B cell (primary cell): ENCODE measurements at regions of chr11 and their contacts with region 1.

Region 1: GRCh38 chr11:120335908-120336640 is at the start of gene ARHGEF12:
- DNase-seq: peak; percentile 91
- ATAC-seq: peak; percentile 70
- H3K4me3 ChIP-seq: peak within 1 kb of the TSS; percentile 42 to 77 (median 75)
- H3K4me3 Mint-ChIP-seq: peak within 1 kb of the TSS; percentile 93
- H3K27ac ChIP-seq: peak within 1 kb of the TSS; percentile 44 to 56
- H3K27ac Mint-ChIP-seq: peak within 1 kb of the TSS; percentile 91
- H3K4me1 ChIP-seq: peaks cover 22 to 35% of the 10 kb centered on the region in 2 donors
- H3K4me1 Mint-ChIP-seq: peaks cover 35% of the 10 kb centered on the region
- H3K27me3 ChIP-seq: peaks cover 0 to 46% (median 35%) of the 10 kb centered on the region in 4 experiments
- H3K27me3 Mint-ChIP-seq: peaks cover 46% of the 10 kb centered on the region
- CTCF ChIP-seq: no peak
- total RNA-seq, gene ARHGEF12: 21.6 and 23.8 TPM in 2 replicates

Region 2: DNA sequence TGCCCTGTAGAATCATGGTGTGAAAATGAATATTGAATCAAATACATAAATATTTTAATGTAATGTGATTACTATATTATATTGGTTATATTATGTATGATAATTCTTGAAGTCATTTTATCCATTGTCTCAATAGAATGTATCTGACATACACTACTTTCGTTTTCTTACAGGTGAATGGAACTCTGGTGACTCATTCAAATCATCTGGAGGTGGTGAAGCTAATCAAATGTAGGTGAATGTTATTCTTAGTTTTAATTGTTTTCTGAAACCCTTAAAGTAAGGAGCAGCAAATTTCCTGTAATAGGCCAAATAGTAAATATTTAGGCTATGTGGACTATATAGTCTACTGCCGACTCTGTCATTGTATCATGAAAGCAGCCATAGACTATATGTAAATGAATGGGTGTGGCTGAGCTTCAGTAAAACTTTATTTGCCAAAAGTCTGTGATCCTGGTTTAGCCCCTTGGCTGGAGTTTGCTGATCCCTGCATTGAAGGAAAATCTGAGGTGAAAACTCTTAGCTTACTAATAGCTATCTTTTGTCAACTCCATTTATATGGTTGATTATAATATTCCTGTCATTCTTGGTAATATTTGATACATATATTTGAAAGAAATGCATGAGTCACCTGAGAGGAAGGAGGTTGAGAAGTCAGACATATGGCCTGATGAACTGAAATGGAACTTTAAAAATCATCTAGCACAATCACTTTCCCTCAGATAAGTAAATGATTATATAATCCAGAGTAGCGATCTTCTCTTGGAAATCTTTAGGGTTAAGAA is 88.3 kb after region 1 on chr11:
- CTCF ChIA-PET with region 1: no interaction called
- POLR2A ChIA-PET with region 1: no interaction called
- intact Hi-C with region 1: loop called (anchors 10 kb)
- DNase-seq: no peak
- ATAC-seq: no peak
- H3K4me3 ChIP-seq: no peak overlapping the region
- H3K4me3 Mint-ChIP-seq: no peak overlapping the region
- H3K27ac ChIP-seq: no peak overlapping the region
- H3K27ac Mint-ChIP-seq: no peak overlapping the region
- H3K4me1 ChIP-seq: peaks cover 8 to 12% of the 10 kb centered on the region in 2 donors
- H3K4me1 Mint-ChIP-seq: peaks cover 14% of the 10 kb centered on the region
- H3K27me3 ChIP-seq: no peaks in the 10 kb centered on the region
- H3K27me3 Mint-ChIP-seq: no peaks in the 10 kb centered on the region
- CTCF ChIP-seq: no peak

Region 3: DNA sequence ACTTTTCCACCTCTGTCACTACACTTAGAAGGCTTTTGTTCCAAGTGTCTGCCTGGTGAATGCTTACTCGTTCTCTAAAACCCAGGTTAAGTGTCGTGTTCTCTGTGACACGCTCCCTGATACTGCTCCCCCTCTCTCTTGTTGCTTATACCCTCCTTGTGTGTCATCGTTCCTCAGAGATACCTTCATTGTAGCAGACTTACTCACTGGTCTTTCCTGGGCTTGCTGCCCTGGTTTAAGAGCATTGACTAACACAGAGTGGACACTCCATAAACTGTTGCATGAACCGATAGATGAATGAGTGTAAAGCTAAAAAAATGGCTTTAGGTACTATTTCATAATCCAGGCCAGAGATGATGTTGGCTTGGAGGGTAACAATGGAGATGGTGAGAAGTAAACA is 346.8 kb after region 1 on chr11:
- CTCF ChIA-PET with region 1: interaction called, 50 read pairs
- POLR2A ChIA-PET with region 1: no interaction called
- intact Hi-C with region 1: no loop called
- DNase-seq: no peak
- ATAC-seq: no peak
- H3K4me3 ChIP-seq: no peak overlapping the region
- H3K4me3 Mint-ChIP-seq: no peak overlapping the region
- H3K27ac ChIP-seq: no peak overlapping the region
- H3K27ac Mint-ChIP-seq: no peak overlapping the region
- H3K4me1 ChIP-seq: no peaks in the 10 kb centered on the region
- H3K4me1 Mint-ChIP-seq: no peaks in the 10 kb centered on the region
- H3K27me3 ChIP-seq: peaks cover 0 to 9% (median 0%) of the 10 kb centered on the region in 4 experiments
- H3K27me3 Mint-ChIP-seq: peaks cover 33% of the 10 kb centered on the region
- CTCF ChIP-seq: no peak

Region 4: DNA sequence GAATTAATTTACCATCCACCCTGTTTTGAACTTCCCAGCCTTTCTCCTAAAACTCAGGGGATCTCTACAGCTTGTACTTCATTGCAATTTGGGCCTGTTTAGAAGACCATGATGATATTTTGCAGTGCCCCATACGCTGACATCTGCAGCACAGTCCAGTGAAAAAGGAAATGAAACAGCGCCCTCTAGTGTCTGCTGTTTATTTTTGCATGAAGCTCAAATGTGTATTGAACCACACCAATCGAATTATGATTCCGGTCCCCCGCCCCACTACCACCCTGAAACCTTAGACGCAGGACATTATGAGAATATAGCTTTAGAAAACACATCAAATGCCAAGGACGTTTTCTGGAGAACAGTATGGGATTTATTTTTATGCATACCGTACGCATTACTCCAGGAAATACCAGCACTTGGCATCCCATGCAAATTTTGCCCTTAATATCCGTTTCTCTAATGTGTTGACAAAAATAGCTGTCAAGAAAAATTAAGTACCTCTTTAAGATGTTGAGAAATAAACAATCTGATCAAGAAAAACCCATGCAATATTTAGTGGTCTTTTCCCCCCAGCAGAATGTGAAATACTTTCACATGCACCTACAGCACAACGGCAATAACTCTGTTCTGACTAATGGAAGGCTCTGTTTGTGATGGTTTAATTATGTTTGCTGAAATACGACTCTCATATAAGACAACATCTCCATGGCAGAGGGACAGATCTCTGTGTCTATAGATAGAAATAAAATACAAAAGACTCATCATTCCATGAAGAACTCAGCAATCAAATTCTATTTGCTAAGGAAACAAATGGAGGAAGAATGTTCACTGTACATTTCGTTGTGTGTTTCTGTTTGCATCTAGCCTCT is 858.9 kb after region 1 on chr11:
- CTCF ChIA-PET with region 1: interaction called, 18 read pairs
- POLR2A ChIA-PET with region 1: no interaction called
- intact Hi-C with region 1: no loop called
- DNase-seq: peak; percentile 77
- ATAC-seq: peak; percentile 63
- H3K4me3 ChIP-seq: no peak overlapping the region
- H3K4me3 Mint-ChIP-seq: no peak overlapping the region
- H3K27ac ChIP-seq: no peak overlapping the region
- H3K27ac Mint-ChIP-seq: no peak overlapping the region
- H3K4me1 ChIP-seq: peaks cover 5% of the 10 kb centered on the region in 2 donors
- H3K4me1 Mint-ChIP-seq: peaks cover 8% of the 10 kb centered on the region
- H3K27me3 ChIP-seq: peaks cover 0 to 28% (median 0%) of the 10 kb centered on the region in 4 experiments
- H3K27me3 Mint-ChIP-seq: peaks cover 35% of the 10 kb centered on the region
- CTCF ChIP-seq: peak; percentile 96